B cell (primary cell): ENCODE measurements at regions of chr1 and their contacts with region 1.

Region 1: DNA sequence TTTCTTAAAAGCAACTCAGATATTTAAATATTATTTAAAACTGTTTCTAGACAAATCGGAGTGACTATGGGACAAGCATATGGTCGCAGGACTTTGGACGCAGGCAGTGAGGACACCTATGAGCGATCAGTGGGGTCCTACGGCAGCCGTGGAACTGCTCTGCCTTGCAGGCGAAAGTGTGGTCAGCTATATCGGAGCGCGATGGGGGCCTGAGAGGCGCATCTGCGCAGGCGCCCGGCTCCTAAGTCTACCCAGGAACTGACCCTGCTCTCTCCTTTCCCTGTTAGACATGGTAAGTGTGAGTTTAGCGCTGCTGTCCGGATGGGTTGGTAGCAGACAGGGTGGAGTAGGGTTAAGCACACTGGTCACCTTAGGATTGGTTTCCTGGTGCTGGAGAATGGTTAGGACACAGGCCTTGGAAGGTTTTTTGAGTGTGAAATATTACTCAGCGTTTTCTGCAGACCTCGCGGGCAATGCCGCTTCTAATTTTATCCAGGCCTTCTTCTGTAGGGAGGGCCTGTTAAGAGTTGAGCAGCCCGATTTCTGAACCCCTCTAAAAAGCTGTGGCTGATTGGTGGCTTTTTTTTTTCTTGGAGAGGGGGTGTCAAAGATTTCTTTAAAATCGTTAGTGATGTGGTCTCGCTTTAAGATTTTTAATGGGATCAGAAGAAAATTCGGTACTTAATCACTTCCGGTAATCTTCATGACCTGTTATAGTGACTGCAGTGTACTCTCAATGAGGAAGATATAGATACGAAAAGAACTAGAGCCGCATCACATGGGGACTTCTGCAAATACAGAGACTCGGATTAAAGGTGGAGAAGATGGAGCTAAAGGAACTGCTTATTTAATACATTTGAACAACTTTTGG is at the start of gene RABGGTB:
- DNase-seq: peak; percentile 97
- ATAC-seq: peak; percentile 91
- H3K4me3 ChIP-seq: peak within 1 kb of the TSS; percentile 76 to 99 (median 95)
- H3K4me3 Mint-ChIP-seq: peak within 1 kb of the TSS; percentile 97
- H3K27ac ChIP-seq: peak within 1 kb of the TSS; percentile 77 to 90
- H3K27ac Mint-ChIP-seq: peak within 1 kb of the TSS; percentile 97
- H3K4me1 ChIP-seq: peaks cover 42 to 46% of the 10 kb centered on the region in 2 donors
- H3K4me1 Mint-ChIP-seq: peaks cover 57% of the 10 kb centered on the region
- H3K27me3 ChIP-seq: no peaks in the 10 kb centered on the region
- H3K27me3 Mint-ChIP-seq: no peaks in the 10 kb centered on the region
- CTCF ChIP-seq: no peak
- total RNA-seq, gene RABGGTB: 132 and 134 TPM in 2 replicates

Region 2: DNA sequence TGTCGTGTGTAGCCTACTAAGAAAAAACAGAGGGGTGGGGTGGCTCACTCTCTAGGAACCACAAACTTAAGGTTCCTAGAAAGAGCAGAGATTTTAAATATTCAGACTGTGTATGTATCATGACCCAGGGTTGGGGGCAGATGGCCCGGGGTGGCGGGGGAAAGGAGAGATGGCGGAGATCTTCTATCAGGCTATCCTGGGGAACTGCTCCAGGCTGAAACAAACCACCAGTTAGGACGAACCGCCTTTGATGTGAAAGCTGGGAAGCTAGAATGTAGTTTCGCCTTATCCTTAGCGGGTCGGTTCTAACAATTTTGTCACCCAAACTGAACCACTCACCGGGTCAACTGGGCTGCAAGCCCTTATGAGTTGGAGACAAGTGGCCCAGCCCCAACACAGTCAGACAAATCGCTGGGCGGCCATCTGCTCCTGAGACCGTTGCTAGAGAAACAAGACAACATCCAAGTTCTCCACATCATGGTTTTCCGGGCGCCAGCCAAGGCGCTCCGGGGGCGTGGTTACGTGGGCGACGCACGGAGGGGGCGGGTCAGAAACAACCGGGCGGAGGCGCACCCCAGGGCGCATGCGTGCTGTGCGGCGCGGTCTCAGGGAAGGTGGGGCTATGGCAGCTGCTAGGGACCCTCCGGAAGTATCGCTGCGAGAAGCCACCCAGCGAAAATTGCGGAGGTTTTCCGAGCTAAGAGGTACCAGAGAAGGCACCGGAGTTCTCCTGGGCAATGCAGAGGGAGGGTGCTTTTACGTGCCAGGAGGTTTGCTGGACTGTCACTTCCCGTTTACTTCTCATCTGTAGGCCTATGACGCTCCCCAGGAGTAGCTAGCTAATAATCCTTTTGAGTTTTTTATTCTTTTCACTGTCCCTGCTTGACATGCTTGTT is 1588.3 kb before region 1 on chr1 and contains the starts of genes FPGT and LRRIQ3:
- CTCF ChIA-PET with region 1: no interaction called
- POLR2A ChIA-PET with region 1: no interaction called
- intact Hi-C with region 1: loop called (anchors 5 kb)
- DNase-seq: peak; percentile 96
- ATAC-seq: peak; percentile 97
- H3K4me3 ChIP-seq: peak within 1 kb of the TSS; percentile 58 to 95 (median 77)
- H3K4me3 Mint-ChIP-seq: peak within 1 kb of the TSS; percentile 93
- H3K27ac ChIP-seq: peak within 1 kb of the TSS; percentile 77 to 85
- H3K27ac Mint-ChIP-seq: peak within 1 kb of the TSS; percentile 96
- H3K4me1 ChIP-seq: peaks cover 8 to 16% of the 10 kb centered on the region in 2 donors
- H3K4me1 Mint-ChIP-seq: peaks cover 24% of the 10 kb centered on the region
- H3K27me3 ChIP-seq: no peaks in the 10 kb centered on the region
- H3K27me3 Mint-ChIP-seq: no peaks in the 10 kb centered on the region
- CTCF ChIP-seq: no peak
- total RNA-seq, gene FPGT: 10.7 and 14.8 TPM in 2 replicates
- total RNA-seq, gene LRRIQ3: 1.4 and 2.2 TPM in 2 replicates

Region 3: DNA sequence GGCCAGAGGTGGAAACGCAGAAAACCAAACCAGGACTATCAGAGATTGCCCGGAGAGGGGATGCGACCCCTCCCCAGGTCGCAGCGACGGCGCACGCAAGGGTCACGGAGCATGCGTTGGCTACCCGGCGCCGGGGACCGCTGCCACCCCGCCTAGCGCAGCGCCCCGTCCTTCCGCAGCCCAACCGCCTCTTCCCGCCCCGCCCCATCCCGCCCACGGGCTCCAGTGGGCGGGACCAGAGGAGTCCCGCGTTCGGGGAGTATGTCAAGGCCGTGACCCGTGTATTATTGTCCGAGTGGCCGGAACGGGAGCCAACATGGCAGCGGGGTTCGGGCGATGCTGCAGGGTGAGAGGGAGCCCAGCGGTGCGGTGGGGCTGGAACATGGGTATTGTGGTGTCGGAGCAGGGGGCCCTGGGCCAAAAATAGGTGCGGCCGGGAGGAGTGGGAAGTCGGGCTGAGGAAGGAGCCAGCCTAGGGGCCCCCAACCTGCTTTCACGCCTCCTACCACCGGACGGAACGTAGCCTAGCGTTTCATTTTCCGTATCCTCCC is 61.7 kb before region 1 on chr1 and contains the start of gene ACADM:
- CTCF ChIA-PET with region 1: interaction called, 8 read pairs
- POLR2A ChIA-PET with region 1: interaction called, 16 read pairs
- intact Hi-C with region 1: loop called (anchors 1 kb)
- DNase-seq: peak; percentile 90
- ATAC-seq: peak; percentile 90
- H3K4me3 ChIP-seq: peak within 1 kb of the TSS; percentile 64 to 96 (median 93)
- H3K4me3 Mint-ChIP-seq: peak within 1 kb of the TSS; percentile 100
- H3K27ac ChIP-seq: peak within 1 kb of the TSS; percentile 88 to 90
- H3K27ac Mint-ChIP-seq: peak within 1 kb of the TSS; percentile 99
- H3K4me1 ChIP-seq: peaks cover 30 to 32% of the 10 kb centered on the region in 2 donors
- H3K4me1 Mint-ChIP-seq: peaks cover 46% of the 10 kb centered on the region
- H3K27me3 ChIP-seq: no peaks in the 10 kb centered on the region
- H3K27me3 Mint-ChIP-seq: no peaks in the 10 kb centered on the region
- CTCF ChIP-seq: no peak
- total RNA-seq, gene ACADM: 53.3 and 57.4 TPM in 2 replicates

Region 4: DNA sequence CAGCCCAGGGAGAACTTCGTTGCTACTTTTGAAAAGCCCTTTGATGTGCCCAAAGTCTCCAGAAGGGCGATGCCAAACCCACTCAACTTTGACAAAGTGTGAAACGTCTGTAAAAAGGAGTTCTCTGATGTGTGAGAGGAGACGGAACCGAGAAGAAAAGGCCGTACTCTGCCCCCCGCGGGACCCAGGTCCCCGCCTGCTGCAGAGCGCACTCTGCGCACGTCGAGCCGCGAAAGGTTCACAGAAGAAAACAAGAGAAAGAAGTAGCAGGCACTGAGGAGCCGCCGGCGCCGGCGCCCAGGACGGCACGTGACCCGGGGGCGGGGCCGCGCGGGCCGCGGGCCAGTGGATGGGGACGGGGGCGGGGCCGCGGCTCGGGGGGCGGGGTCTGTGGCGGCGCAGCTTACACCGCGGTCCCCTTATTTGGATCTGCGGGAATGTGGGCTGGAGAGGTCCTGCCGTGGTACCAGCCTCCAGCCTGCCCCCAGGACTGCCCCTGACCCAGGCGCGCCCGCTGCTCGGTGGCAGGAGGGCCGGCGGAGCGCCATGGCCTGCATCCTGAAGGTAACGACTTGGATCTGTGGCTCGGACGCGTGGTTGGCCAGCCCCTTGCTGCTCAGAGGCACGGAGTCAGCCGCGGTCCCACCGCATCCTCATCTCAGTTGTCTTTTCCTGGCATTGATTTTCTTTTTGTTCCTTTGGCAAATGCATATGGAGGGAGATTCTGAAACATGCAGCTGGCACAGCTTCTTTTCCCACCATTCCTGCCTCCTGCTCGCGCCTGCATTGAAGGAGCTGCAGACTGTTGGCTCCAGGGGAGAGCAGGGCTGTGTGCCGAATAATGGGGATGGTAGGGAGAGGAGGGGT is 288.3 kb after region 1 on chr1 and contains the start of gene ST6GALNAC3:
- CTCF ChIA-PET with region 1: no interaction called
- POLR2A ChIA-PET with region 1: no interaction called
- intact Hi-C with region 1: loop called (anchors 1 kb)
- DNase-seq: peak; percentile 87
- ATAC-seq: peak; percentile 80
- H3K4me3 ChIP-seq: peak within 1 kb of the TSS; percentile 80 to 86 (median 84)
- H3K4me3 Mint-ChIP-seq: peak within 1 kb of the TSS; percentile 90
- H3K27ac ChIP-seq: peak within 1 kb of the TSS; percentile 66 to 75
- H3K27ac Mint-ChIP-seq: peak within 1 kb of the TSS; percentile 87
- H3K4me1 ChIP-seq: peaks cover 20 to 21% of the 10 kb centered on the region in 2 donors
- H3K4me1 Mint-ChIP-seq: peaks cover 34% of the 10 kb centered on the region
- H3K27me3 ChIP-seq: no peaks in the 10 kb centered on the region
- H3K27me3 Mint-ChIP-seq: peaks cover 10% of the 10 kb centered on the region
- CTCF ChIP-seq: no peak
- total RNA-seq, gene ST6GALNAC3: 13.4 and 17.3 TPM in 2 replicates

Region 5: DNA sequence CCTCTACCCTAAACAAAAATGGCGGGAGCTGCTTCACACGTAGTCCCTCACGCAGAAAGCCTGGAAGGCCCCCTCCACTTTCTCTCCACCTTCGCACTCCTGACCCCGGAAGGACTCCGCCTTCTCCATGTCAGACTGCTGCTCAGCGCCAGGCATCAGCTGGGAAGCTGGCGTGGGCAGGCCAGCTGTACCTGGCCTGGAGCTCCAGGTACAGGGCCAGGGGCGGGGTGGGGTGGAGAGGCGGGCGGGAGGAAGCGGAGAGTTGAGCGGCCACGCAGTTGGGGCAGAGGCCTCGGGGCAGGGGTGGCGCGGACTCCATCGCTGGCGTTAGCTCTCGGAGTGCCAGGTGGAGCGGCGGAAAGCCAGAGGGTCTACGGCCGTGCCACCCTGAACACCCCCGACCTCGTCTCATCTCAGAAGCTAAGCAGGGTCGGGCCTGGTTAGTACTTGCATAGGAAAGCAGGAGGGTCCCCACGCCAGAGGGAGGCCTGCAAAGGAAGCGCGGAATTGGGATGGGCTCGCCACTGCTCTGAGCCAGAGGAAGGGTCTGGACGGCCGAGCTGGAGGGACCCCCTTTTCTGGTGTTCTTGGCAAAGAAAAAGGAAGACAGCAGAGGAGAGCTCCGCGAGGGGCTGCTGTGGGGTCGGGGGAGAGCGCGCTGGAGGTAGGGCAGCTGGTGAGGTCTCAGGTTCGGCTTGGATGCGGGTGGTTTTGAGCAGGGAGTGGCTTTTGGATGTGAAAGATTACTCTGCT is 1993.5 kb after region 1 on chr1 and contains the start of gene MIGA1:
- CTCF ChIA-PET with region 1: no interaction called
- POLR2A ChIA-PET with region 1: no interaction called
- intact Hi-C with region 1: loop called (anchors 2 kb)
- DNase-seq: peak; percentile 92
- ATAC-seq: peak; percentile 97
- H3K4me3 ChIP-seq: peak within 1 kb of the TSS; percentile 57 to 95 (median 83)
- H3K4me3 Mint-ChIP-seq: peak within 1 kb of the TSS; percentile 94
- H3K27ac ChIP-seq: peak within 1 kb of the TSS; percentile 45 to 85
- H3K27ac Mint-ChIP-seq: peak within 1 kb of the TSS; percentile 89
- H3K4me1 ChIP-seq: peaks cover 9 to 11% of the 10 kb centered on the region in 2 donors
- H3K4me1 Mint-ChIP-seq: peaks cover 28% of the 10 kb centered on the region
- H3K27me3 ChIP-seq: peaks cover 0 to 1% (median 0%) of the 10 kb centered on the region in 4 experiments
- H3K27me3 Mint-ChIP-seq: peaks cover 2% of the 10 kb centered on the region
- CTCF ChIP-seq: no peak
- total RNA-seq, gene MIGA1: 18.0 and 20.9 TPM in 2 replicates